ENCODE measurements at regions of chr10 and their contacts with region 1.

Region 1: DNA sequence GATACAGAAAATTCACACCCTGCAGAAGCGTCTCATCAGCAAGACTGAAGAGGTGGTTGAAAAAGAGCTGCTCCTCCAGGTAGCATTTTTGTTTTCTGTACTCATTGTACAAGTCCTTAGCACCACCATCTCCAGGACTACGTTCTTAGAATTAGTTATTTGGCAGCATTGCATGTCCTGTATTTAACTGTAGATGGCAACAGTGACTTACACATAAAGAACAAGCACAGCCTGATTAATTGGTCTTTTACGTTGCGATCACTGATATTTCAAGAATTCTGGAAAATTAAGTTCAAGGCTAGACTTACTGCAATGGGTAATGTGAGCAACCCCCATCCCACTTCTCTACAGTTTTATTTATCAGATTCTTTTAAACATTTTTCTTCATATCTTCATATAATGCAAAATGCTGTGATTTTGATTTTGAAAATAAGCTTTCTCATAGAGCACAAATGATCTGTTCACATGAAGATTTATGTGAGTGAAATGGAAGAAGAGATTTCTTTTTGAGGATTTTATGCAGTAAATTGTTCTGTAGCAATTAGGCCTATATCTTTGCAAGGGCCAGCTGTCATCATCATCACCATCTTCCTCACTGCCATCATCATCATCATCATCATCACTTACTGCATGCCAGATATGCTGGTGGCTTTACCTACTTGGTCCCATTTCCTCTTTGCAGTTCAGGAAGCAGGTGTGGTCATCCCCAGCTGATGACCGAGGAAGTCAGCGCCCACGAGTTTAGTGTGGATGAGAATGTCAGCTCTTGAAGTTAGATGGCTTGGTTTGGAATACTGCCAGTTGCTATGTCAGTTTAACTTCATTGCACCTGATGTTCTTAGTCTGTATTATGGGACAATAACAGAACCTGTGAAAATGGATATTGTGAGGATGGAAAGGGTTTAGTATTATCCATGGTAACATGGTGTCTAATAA is 53.4 kb downstream of the CFAP58 start:
- DNase-seq: peak; percentile 44
- H3K4me3 ChIP-seq: no peak overlapping the region; a peak in 1 of 4 replicates
- H3K27ac ChIP-seq: no peak overlapping the region
- H3K4me1 ChIP-seq: no peaks in the 10 kb centered on the region; a peak in 1 of 4 replicates
- H3K27me3 ChIP-seq: no peaks in the 10 kb centered on the region
- CTCF ChIP-seq: peak; percentile 84
- EP300 ChIP-seq: no peak
- RAD21 ChIP-seq: peak; percentile 93

Region 2: GRCh38 chr10:104380336-104380735 is 26.6 kb before region 1 on chr10:
- CTCF ChIA-PET with region 1: interaction called, 10 read pairs
- POLR2A ChIA-PET with region 1: no interaction called
- DNase-seq: no peak
- H3K4me3 ChIP-seq: no peak overlapping the region
- H3K27ac ChIP-seq: no peak overlapping the region
- H3K4me1 ChIP-seq: no peaks in the 10 kb centered on the region
- H3K27me3 ChIP-seq: no peaks in the 10 kb centered on the region; the same call in 1 of the 2 replicates
- CTCF ChIP-seq: no peak
- EP300 ChIP-seq: no peak
- RAD21 ChIP-seq: no peak

Region 3: DNA sequence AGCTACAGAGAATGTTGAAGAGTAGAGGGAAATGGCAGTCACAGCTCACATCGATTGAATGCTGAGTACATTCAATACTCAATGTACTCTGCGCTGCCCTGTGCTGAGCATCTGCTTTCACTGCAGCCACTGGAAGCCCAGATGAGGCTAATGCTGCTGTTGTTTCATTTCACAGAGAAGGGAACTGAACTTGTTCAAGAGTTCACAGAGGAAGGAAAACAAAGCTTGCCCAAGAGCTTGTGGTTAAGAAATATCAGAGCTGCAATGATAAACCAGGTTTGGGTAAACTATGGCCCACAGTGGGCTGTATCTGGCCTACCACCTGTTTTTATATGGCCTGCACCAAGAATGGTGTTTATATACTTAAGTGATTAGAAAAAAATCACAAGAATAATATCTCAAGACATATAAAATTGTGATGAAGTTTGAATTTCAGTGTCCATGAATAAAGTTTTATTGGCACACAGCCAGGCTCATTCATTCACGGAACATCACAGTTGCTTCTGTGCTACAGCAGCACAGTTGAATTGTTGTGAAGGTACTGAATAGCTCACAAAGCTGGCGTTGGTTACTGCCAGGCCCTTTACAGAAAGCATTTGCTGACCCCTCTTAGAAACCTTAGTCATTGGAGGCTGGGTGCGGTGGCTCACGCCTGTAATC is 10.8 kb after region 1 on chr10:
- CTCF ChIA-PET with region 1: interaction called, 36 read pairs
- POLR2A ChIA-PET with region 1: no interaction called
- DNase-seq: no peak
- H3K4me3 ChIP-seq: no peak overlapping the region
- H3K27ac ChIP-seq: no peak overlapping the region
- H3K4me1 ChIP-seq: no peaks in the 10 kb centered on the region
- H3K27me3 ChIP-seq: no peaks in the 10 kb centered on the region
- CTCF ChIP-seq: no peak
- EP300 ChIP-seq: no peak
- RAD21 ChIP-seq: no peak

Region 4: DNA sequence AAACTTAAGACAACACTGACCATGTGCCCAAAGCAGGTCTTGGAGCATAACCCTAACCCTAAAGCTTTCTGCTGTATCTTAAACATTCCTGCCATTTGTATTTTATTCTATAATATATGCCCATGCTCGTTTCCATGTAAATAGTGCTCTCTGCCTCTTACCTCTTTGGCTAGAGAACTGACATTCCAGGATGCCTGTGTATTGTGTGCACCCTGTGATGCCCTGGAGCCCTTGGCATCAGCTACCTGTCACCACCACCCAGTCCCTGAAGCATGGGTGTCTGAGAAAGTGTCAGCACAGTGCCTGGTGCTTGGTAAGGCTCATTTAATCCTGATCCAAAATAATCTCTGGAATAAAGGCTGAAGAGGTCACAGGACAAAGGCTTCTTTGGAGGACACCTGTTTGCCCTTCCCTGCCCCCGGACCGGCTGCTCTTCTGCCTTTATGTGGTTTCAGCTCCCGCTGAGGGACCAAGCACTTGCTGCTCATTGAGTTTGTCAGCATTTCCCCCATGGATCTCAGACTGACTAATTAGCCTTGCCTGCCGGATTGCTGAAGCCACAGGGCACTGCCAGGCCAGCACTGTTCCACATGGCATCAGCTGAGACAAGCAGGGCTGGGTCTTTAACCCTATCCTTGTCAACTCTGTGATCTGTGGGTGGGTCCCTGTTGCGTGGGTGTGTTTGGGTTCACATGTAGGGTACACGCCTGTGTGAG is 95.0 kb after region 1 on chr10:
- CTCF ChIA-PET with region 1: interaction called, 26 read pairs
- POLR2A ChIA-PET with region 1: no interaction called
- DNase-seq: peak; percentile 59
- H3K4me3 ChIP-seq: no peak overlapping the region
- H3K27ac ChIP-seq: peak overlapping the region in 1 of 2 experiments; percentile 84; a peak in 2 of 4 replicates
- H3K4me1 ChIP-seq: peaks cover 0 to 33% of the 10 kb centered on the region in 2 experiments; a peak in 2 of 4 replicates
- H3K27me3 ChIP-seq: no peaks in the 10 kb centered on the region
- CTCF ChIP-seq: no peak
- EP300 ChIP-seq: no peak
- RAD21 ChIP-seq: no peak

Region 5: DNA sequence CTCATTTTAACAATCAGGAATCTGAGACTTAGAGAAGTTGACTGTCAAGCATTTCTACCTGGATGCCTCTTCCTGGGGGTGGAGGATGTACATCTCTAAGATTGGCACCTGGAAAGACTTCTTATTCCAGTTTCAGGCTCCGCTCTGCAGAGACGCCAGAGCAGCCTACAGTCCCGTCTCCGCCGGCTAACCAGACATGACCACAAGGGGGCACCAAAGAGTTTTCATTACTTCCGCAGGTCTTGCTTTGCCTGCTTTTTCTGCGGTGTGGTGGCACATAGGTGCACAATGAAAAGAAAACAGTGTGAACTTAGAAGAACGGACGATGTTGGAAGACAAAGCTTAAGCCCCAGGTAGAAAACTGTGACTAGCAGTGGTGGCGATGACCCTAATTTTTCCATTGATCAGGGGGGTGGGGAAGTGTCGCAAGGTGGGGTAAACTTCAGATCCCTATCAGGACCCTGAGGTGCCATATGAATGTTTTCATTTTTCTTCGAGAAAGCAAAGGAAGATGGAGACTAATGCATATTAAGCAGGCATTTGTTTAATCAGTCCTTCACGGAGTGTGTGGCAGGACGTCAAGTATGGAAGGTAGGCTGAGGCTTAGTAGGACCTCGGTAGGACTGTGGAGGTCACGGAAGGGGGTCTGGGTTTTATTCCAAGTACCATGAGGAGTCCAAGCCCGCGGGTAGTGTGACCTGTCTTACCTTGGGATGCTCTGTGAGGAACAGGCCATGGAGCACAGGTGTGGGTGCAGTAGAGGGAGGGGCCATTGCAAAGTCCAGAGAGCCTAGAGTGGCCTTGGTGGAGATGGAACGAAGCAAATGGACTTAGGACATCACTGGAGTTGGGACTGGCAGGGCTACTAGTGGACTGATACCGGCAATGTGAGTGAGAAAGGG is 174.0 kb after region 1 on chr10:
- CTCF ChIA-PET with region 1: interaction called, 43 read pairs
- POLR2A ChIA-PET with region 1: no interaction called
- DNase-seq: peak; percentile 79
- H3K4me3 ChIP-seq: no peak overlapping the region
- H3K27ac ChIP-seq: peak overlapping the region in 1 of 2 experiments; percentile 63; a peak in 1 of 4 replicates
- H3K4me1 ChIP-seq: no peaks in the 10 kb centered on the region; a peak in 1 of 4 replicates
- H3K27me3 ChIP-seq: no peaks in the 10 kb centered on the region
- CTCF ChIP-seq: peak; percentile 89
- EP300 ChIP-seq: no peak
- RAD21 ChIP-seq: peak; percentile 83

Region 6: GRCh38 chr10:104614245-104614831 is 207.4 kb after region 1 on chr10:
- CTCF ChIA-PET with region 1: interaction called, 111 read pairs
- POLR2A ChIA-PET with region 1: no interaction called
- DNase-seq: peak; percentile 52
- H3K4me3 ChIP-seq: no peak overlapping the region
- H3K27ac ChIP-seq: no peak overlapping the region
- H3K4me1 ChIP-seq: no peaks in the 10 kb centered on the region; a peak in 1 of 4 replicates
- H3K27me3 ChIP-seq: no peaks in the 10 kb centered on the region; the same call in 1 of the 2 replicates
- CTCF ChIP-seq: peak; percentile 75
- EP300 ChIP-seq: no peak
- RAD21 ChIP-seq: peak; percentile 72

Region 7: GRCh38 chr10:104642658-104643302 is 235.8 kb after region 1 on chr10:
- CTCF ChIA-PET with region 1: interaction called, 18 read pairs
- POLR2A ChIA-PET with region 1: no interaction called
- DNase-seq: peak; percentile 88
- H3K4me3 ChIP-seq: peak overlapping the region; percentile 28 to 39; a peak in 2 of 4 replicates
- H3K27ac ChIP-seq: no peak overlapping the region
- H3K4me1 ChIP-seq: peaks cover 0 to 18% of the 10 kb centered on the region in 2 experiments; a peak in 1 of 4 replicates
- H3K27me3 ChIP-seq: peaks cover 31% of the 10 kb centered on the region
- CTCF ChIP-seq: peak; percentile 55
- EP300 ChIP-seq: no peak
- RAD21 ChIP-seq: peak; percentile 63

Region 8: DNA sequence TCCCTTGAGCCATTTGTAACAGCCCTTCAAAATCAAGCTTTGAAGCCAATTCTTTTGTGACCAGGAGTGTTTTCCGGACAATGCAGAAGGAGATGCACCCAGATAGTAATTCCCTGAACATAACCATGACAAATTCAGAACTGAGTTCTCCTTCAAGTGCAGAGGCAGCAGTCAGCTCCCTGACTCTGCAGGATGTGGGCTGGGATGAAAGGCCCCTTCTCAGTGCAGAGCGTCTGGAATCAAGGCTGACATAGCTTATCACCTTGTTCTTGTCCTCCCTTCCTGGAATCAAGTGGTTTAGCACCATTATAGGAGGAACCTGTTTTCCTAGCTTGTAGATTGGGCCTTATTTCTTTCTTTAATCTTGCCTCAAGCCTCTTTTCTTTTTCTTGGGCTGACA is 377.5 kb after region 1 on chr10:
- CTCF ChIA-PET with region 1: no interaction called
- POLR2A ChIA-PET with region 1: no interaction called
- DNase-seq: no peak
- H3K4me3 ChIP-seq: no peak overlapping the region
- H3K27ac ChIP-seq: no peak overlapping the region
- H3K4me1 ChIP-seq: no peaks in the 10 kb centered on the region
- H3K27me3 ChIP-seq: no peaks in the 10 kb centered on the region
- CTCF ChIP-seq: no peak
- EP300 ChIP-seq: no peak
- RAD21 ChIP-seq: no peak

Measured in SK-N-SH (cell line).